ENCODE measurements at regions of chr17 and their contacts with region 1.

Region 1: GRCh38 chr17:8173056-8173870 is 2.9 kb downstream of the TMEM107 start:
- DNase-seq: no peak
- H3K4me3 ChIP-seq: peak overlapping the region; percentile 27 to 68 (median 51)
- H3K27ac ChIP-seq: peak overlapping the region; percentile 99
- H3K4me1 ChIP-seq: peaks cover 3 to 13% (median 8%) of the 10 kb centered on the region in 4 experiments
- H3K27me3 ChIP-seq: no peaks in the 10 kb centered on the region
- CTCF ChIP-seq: no peak
- EP300 ChIP-seq: peak in 1 of 2 experiments; percentile 57; a peak in 1 of 3 replicates
- POLR2A ChIP-seq: peak; percentile 100
- RAD21 ChIP-seq: 0 out of 4 replicates have a peak, but pooled peaks of 1 of the 2 experiments have one; percentile 0

Region 2: GRCh38 chr17:8025176-8025911 is 147.9 kb before region 1 on chr17:
- CTCF ChIA-PET with region 1: no interaction called
- POLR2A ChIA-PET with region 1: no interaction called
- DNase-seq: no peak
- H3K4me3 ChIP-seq: no peak overlapping the region
- H3K27ac ChIP-seq: no peak overlapping the region
- H3K4me1 ChIP-seq: no peaks in the 10 kb centered on the region
- H3K27me3 ChIP-seq: no peaks in the 10 kb centered on the region; a peak in 2 of 7 replicates
- CTCF ChIP-seq: no peak
- EP300 ChIP-seq: no peak
- POLR2A ChIP-seq: no peak
- RAD21 ChIP-seq: no peak

Region 3: DNA sequence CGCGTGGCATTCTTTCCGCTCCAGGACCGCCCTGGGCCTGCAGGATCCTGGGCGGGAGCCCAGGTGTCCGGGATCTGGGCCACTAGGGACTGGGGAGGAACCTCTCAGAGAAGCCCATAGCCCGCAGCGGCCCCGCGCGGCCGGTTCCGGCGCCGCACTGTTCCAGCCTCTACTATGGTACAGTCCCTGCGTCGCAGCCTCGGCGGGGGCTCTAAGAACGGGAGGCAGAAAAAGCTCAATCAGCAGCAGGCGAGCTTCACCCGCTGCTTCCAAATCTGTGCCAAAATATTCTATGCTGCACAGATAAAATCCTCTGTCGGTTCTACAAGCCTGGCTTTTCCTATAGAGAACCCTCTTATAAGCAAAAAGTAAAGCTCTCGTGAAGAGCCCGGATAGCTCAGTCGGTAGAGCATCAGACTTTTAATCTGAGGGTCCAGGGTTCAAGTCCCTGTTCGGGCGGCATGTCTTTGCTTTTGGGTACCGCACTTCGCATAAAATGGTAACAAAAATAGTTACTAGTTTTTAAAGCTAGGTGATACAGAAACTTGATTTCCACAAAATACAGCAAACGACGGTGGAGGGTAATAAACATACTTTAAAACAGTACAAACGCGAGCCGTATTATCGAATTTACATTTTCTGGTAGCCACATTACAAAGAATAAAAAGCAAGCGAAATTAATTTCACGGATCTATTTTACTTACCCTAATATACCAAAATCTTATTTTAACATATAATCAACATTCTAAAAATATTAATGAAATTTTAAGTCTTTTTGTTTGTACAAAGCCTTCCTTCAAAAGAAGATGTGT is 54.3 kb before region 1 on chr17:
- CTCF ChIA-PET with region 1: interaction called, 4 read pairs
- POLR2A ChIA-PET with region 1: interaction called, 33 read pairs
- DNase-seq: peak in 1 of 2 experiments; percentile 96
- H3K4me3 ChIP-seq: peak overlapping the region; percentile 75 to 89 (median 82)
- H3K27ac ChIP-seq: no peak overlapping the region
- H3K4me1 ChIP-seq: peaks cover 0 to 12% (median 6%) of the 10 kb centered on the region in 4 experiments; a peak in 5 of 7 replicates
- H3K27me3 ChIP-seq: peaks cover 27 to 60% (median 52%) of the 10 kb centered on the region in 4 experiments
- CTCF ChIP-seq: peak; percentile 78 to 92 (median 81)
- EP300 ChIP-seq: 0 out of 3 replicates have a peak, but pooled peaks of 1 of the 2 experiments have one; percentile 19
- POLR2A ChIP-seq: no peak
- RAD21 ChIP-seq: peak; percentile 58 to 72

Region 4: GRCh38 chr17:8131844-8132441 is 41.3 kb before region 1 on chr17:
- CTCF ChIA-PET with region 1: interaction called, 9 read pairs
- POLR2A ChIA-PET with region 1: interaction called, 34 read pairs
- DNase-seq: no peak
- H3K4me3 ChIP-seq: no peak overlapping the region
- H3K27ac ChIP-seq: no peak overlapping the region
- H3K4me1 ChIP-seq: peaks cover 0 to 14% (median 8%) of the 10 kb centered on the region in 4 experiments; a peak in 6 of 7 replicates
- H3K27me3 ChIP-seq: peaks cover 0 to 17% (median 14%) of the 10 kb centered on the region in 4 experiments; a peak in 6 of 7 replicates
- CTCF ChIP-seq: no peak
- EP300 ChIP-seq: no peak
- POLR2A ChIP-seq: no peak
- RAD21 ChIP-seq: no peak

Region 5: DNA sequence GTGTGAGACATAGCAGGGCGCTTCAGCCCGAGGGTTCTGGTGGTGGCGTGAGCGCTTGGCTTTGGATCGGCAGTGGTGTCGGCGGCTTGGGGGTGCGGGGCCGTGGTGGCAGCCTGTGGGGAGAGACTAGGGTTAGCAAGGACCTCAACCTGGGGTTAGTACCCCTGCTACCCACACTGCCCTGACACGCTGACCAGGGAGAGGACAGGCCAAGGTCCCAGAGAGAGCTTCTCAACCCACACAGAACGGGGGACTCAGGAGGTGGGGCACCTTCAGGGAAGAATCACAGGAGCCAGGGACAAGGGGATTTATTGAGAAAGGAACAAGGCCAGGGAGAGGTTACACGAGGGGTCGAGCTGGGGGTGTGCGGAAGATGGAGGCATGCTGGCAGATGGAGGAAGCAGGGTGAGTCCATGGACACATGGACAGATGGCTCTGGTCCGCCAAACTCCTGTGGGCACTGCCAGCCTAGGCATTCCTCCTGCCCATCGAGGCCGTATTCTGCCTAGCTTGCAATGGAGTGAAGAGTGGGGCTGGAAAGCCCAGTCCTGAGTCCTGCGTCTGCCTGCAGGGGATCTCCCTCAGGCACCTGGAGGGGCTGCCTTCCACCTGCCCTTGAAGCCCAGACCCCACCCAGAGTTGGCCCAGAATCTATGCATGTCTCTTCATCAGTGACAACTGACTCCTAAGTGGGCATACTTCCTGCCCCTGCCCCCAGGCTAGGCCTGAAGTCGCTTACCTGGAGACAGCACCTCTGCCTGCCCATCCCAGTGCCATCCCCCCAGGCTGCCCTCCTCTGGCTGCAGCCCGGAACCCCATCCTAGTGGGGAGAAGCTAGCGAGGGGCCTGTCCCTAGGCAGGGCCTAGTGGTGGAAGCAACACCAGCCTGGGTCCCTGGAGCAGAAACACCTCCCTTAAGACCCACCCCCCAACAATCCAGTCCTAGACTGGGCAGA is 29.2 kb before region 1 on chr17:
- CTCF ChIA-PET with region 1: no interaction called
- POLR2A ChIA-PET with region 1: interaction called, 33 read pairs
- DNase-seq: no peak
- H3K4me3 ChIP-seq: no peak overlapping the region
- H3K27ac ChIP-seq: no peak overlapping the region
- H3K4me1 ChIP-seq: peaks cover 0 to 3% (median 1%) of the 10 kb centered on the region in 4 experiments; a peak in 1 of 7 replicates
- H3K27me3 ChIP-seq: no peaks in the 10 kb centered on the region
- CTCF ChIP-seq: no peak
- EP300 ChIP-seq: no peak
- POLR2A ChIP-seq: no peak
- RAD21 ChIP-seq: no peak

Region 6: GRCh38 chr17:8156246-8156992 is 16.8 kb before region 1 on chr17:
- CTCF ChIA-PET with region 1: interaction called, 14 read pairs
- POLR2A ChIA-PET with region 1: interaction called, 289 read pairs
- DNase-seq: peak; percentile 99 to 100
- H3K4me3 ChIP-seq: peak overlapping the region; percentile 76 to 93 (median 85)
- H3K27ac ChIP-seq: peak overlapping the region; percentile 89
- H3K4me1 ChIP-seq: peaks cover 12 to 35% (median 20%) of the 10 kb centered on the region in 4 experiments
- H3K27me3 ChIP-seq: no peaks in the 10 kb centered on the region
- CTCF ChIP-seq: peak in 1 of 3 experiments; percentile 9; a peak in 1 of 4 replicates
- EP300 ChIP-seq: peak in 1 of 2 experiments; percentile 63; a peak in 1 of 3 replicates
- POLR2A ChIP-seq: peak; percentile 54 to 69
- RAD21 ChIP-seq: peak in 1 of 2 experiments; percentile 23; a peak in 1 of 4 replicates

Region 7: DNA sequence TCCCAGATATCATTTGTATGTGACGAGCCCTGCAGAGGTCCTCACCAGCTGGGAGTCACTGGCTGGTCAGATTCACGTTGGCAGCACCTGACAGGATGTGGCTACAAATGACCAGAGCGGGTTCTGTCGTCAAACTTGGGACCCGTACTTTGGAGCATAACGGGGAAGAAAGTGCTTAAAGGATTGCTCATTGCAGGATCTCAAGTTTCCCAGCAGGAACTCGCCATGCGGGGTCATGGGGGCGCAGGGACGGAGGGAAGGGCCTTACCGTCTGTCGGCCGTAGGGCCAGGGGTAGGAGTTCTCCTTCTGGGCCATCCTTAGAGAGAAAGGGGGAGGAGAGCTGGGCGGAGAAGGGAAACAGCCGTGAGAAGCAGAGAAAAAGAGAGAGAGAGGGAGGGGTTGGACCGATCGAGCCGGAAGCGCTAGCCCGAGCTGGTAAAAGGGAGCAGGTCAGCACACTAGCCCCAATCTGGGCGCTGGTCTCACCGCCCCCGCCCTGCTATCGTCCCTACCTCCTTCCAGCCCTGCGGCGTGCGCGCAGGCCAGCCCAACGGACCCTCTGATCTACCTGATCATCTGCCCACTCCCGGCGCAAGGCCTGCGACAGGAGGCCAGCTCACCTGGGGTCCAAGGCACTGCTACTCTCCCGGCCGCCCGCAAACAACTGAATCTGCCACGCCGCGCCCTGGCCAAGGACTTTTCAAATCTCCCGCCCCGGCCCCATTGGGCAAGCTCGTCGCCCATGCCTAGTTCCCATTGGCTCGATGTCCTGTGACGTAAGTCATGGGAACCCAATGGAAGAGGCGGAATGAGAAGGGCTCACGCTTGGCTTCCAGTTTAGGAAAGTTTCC is 36.9 kb after region 1 on chr17 and contains the start of gene AURKB:
- CTCF ChIA-PET with region 1: no interaction called
- POLR2A ChIA-PET with region 1: interaction called, 52 read pairs
- DNase-seq: peak in 1 of 2 experiments; percentile 97
- H3K4me3 ChIP-seq: peak within 1 kb of the TSS; percentile 67 to 93 (median 80)
- H3K27ac ChIP-seq: peak within 1 kb of the TSS; percentile 92; the same call in 1 of the 2 replicates
- H3K4me1 ChIP-seq: peaks cover 0 to 4% (median under 1%) of the 10 kb centered on the region in 4 experiments; a peak in 2 of 7 replicates
- H3K27me3 ChIP-seq: no peaks in the 10 kb centered on the region
- CTCF ChIP-seq: no peak; a peak in 1 of 4 replicates
- EP300 ChIP-seq: no peak
- POLR2A ChIP-seq: peak; percentile 90 to 98
- RAD21 ChIP-seq: no peak
- total RNA-seq, gene AURKB: 154 and 160 TPM in 2 replicates

Measured in H1 (cell line).